ENCODE measurements at regions of chr3 and their contacts with region 1.

Region 1: GRCh38 chr3:186570096-186570940 is at the start of gene DNAJB11:
- DNase-seq: peak; percentile 100
- H3K4me3 Mint-ChIP-seq: peak within 1 kb of the TSS; percentile 95
- H3K27ac Mint-ChIP-seq: peak within 1 kb of the TSS; percentile 85
- H3K4me1 Mint-ChIP-seq: peaks cover 53% of the 10 kb centered on the region
- H3K27me3 Mint-ChIP-seq: no peaks in the 10 kb centered on the region
- total RNA-seq, gene DNAJB11: 30.0 to 30.5 TPM

Region 2: GRCh38 chr3:185937689-185938463 is 632.4 kb before region 1 on chr3 and contains the start of gene TRA2B:
- CTCF ChIA-PET with region 1: interaction called, 8 read pairs
- intact Hi-C with region 1: loop called (anchors 1 kb)
- DNase-seq: peak; percentile 99
- H3K4me3 Mint-ChIP-seq: peak within 1 kb of the TSS; percentile 100
- H3K27ac Mint-ChIP-seq: peak within 1 kb of the TSS; percentile 100
- H3K4me1 Mint-ChIP-seq: peaks cover 20% of the 10 kb centered on the region
- H3K27me3 Mint-ChIP-seq: no peaks in the 10 kb centered on the region
- total RNA-seq, gene TRA2B: 172 to 176 TPM

Region 3: DNA sequence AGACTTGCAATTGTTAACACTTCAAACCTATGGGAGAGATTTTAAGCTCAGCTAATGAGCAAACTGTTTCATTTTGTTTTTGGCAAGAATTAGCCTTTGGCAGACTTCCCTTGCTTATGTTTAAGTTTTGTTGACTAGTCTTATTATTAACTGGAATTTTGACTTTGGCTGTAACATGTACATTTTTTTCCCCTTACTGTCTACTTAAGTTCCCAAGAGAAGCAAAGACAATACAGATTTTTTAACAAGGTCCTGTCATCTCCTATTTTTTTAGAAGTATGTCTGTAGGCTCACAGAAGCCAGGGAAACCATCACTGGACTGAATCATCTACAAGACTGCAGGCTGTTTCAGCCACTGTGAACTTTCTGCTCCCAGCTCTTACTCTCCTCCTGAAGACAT is 282.6 kb before region 1 on chr3:
- CTCF ChIA-PET with region 1: no interaction called
- intact Hi-C with region 1: no loop called
- DNase-seq: no peak
- H3K4me3 Mint-ChIP-seq: no peak overlapping the region
- H3K27ac Mint-ChIP-seq: no peak overlapping the region
- H3K4me1 Mint-ChIP-seq: no peaks in the 10 kb centered on the region
- H3K27me3 Mint-ChIP-seq: no peaks in the 10 kb centered on the region

Region 4: GRCh38 chr3:186534113-186534669 is 36.1 kb before region 1 on chr3:
- CTCF ChIA-PET with region 1: interaction called, 3 read pairs
- intact Hi-C with region 1: loop called (anchors 2 kb)
- DNase-seq: peak; percentile 76
- H3K4me3 Mint-ChIP-seq: peak overlapping the region; percentile 61
- H3K27ac Mint-ChIP-seq: peak overlapping the region; percentile 97
- H3K4me1 Mint-ChIP-seq: peaks cover 94% of the 10 kb centered on the region
- H3K27me3 Mint-ChIP-seq: no peaks in the 10 kb centered on the region

Region 5: GRCh38 chr3:186772701-186773424 is 202.5 kb after region 1 on chr3:
- CTCF ChIA-PET with region 1: no interaction called
- intact Hi-C with region 1: loop called (anchors 1 kb)
- DNase-seq: peak; percentile 83
- H3K4me3 Mint-ChIP-seq: peak overlapping the region; percentile 95
- H3K27ac Mint-ChIP-seq: peak overlapping the region; percentile 95
- H3K4me1 Mint-ChIP-seq: peaks cover 10% of the 10 kb centered on the region
- H3K27me3 Mint-ChIP-seq: no peaks in the 10 kb centered on the region

Region 6: DNA sequence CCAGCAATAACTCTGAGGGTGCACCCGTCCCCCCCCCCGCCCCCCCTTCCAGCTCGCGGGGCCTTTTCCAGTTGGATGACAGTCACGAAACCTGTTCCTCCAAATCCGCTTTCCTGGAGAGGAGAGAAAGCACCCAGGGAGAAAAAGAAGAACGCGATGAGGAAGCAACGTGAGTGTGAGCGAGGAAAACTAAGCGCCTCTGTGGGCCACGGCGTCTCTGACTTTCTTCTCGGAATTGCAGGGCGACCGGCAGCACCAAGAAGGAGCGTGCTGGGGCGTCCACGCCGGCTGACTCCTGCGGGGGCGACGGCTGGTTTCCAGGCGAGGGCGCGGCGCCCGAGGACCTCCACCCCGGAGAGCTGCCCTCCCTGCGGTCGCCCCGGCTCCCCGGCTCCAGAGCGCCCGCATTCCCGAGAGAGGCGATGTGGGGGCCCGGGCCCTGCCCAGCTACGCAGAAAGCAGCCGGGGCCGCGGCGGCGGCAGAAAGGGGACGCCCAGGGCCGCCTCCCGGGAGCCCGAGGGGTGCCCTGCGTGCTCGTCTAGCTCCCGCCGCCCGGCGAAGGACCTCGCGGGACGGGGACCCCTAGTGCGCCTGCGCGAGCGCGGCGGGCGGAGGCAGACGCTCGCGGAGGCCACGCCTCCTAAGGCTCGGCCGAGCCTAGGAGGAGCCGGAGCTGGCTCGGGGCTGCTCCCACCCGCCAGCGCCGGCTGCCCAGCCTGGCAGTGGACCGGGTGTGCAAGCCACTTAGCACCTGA is 256.8 kb after region 1 on chr3:
- CTCF ChIA-PET with region 1: interaction called, 3 read pairs
- intact Hi-C with region 1: loop called (anchors 5 kb)
- DNase-seq: peak; percentile 82
- H3K4me3 Mint-ChIP-seq: peak overlapping the region; percentile 78
- H3K27ac Mint-ChIP-seq: peak overlapping the region; percentile 69
- H3K4me1 Mint-ChIP-seq: peaks cover 30% of the 10 kb centered on the region
- H3K27me3 Mint-ChIP-seq: peaks cover 38% of the 10 kb centered on the region

Region 7: DNA sequence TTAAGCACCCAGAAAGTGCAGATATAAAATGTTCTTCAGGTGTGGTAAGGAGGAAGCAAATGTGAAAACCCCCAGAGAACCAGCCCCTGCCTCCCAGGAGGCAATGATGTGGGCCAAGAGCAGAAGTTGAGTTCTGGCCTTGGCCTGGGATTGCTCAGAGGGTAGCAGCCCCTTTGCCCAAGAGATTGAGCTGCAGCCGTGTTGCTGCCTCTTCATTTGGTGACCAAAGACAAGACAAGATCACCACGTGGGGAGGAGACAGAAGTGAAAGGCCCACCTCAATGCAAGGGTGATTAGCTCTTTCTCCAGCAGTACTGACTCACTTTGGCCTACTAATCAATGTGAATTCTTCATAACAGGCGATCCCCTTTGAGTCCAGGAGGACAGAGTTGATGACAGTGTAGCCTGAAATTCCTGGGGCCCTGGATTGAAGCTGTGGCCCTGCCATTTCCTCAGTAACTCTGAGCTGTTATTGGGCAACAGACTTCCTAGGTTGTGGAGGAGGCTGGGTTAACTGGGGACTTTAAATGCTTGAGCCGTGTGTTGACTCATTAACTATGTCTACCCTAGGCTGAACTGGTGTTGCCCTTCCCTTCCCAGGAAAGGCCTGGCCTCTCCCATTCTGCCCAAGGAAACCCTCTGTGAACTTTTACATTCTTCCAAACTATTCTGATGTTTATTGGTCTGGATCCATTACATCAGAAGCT is 446.5 kb after region 1 on chr3:
- CTCF ChIA-PET with region 1: no interaction called
- intact Hi-C with region 1: no loop called
- DNase-seq: no peak
- H3K4me3 Mint-ChIP-seq: no peak overlapping the region
- H3K27ac Mint-ChIP-seq: peak overlapping the region; percentile 16
- H3K4me1 Mint-ChIP-seq: peaks cover 64% of the 10 kb centered on the region
- H3K27me3 Mint-ChIP-seq: no peaks in the 10 kb centered on the region